Right ventricle myocardium inferior (tissue), 1 donor: ENCODE measurements at regions of chr7 and their contacts with region 1.

Region 1: DNA sequence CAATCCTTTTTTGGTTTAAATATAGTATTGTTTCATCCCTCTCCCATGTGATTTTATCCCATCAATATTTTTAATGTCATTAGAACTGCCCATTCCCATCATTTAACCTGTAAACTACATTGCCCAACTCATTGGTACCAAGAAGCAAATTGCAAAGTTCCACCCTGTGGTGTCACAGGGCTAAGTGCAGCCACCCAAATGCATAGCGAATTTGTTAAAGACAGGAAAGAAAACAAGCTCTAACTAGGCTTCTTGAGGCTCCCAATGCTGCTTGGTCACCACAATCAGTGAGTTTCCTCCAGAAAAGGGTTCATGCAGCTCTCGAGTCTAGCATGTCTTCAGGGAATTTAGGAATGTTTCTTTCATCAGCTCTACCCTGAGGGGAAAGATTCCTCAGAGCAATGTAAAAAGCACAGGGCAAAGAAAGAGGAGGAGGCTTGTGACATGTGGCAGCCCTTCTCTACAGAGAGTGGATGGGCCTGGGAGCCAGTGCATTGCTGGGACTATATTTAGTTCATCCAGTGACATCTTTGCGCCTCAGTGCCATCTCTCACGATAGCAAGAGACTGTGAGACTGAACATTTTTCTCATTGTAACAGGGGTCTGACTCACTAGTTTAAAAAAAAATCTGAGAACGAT is 58.1 kb downstream of the CAV1 start:
- DNase-seq: no peak
- ATAC-seq: peak; percentile 83

Region 2: DNA sequence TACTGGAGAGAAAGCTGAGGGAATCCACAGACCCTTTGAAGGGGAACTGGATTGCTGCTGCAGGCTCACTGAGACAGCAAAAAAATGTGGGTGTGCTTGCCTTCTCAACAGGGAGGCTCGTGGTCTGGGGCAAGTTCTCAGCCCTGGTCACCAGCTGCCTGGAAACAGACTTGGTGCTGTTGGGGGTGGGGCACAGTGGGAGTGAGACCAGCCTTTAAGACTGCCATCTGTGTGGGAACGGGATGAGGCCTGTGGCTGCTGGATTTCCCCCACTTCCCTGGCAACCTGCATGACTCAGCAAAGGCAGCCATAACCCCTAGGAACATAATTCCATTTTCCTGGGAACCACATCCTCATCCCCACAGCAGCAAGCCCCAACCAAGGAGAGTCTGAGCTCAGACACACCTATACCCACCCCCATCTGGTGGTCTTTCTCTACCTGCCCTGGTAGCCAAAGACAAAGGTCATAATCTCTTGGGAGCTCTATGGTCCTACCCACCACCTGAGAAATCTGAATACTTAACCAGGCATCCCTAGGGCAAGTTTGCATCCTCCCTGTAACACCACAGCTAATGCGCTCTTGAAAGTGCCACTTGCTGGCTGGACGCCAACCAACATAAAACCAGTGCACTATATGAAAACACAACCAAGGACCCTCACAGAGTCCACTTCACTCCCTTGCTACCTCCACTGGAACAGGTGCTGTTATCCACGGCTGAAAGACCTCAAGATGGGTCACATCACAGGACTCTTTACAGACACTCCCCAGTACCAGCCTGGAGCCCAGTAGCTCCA is 507.4 kb before region 1 on chr7:
- intact Hi-C with region 1: no loop called
- DNase-seq: no peak
- ATAC-seq: no peak

Region 3: GRCh38 chr7:116548506-116548905 is 34.4 kb before region 1 on chr7:
- intact Hi-C with region 1: loop called (anchors 5 kb)
- DNase-seq: no peak
- ATAC-seq: no peak